ENCODE measurements at regions of chr2 and their contacts with region 1.

Region 1: DNA sequence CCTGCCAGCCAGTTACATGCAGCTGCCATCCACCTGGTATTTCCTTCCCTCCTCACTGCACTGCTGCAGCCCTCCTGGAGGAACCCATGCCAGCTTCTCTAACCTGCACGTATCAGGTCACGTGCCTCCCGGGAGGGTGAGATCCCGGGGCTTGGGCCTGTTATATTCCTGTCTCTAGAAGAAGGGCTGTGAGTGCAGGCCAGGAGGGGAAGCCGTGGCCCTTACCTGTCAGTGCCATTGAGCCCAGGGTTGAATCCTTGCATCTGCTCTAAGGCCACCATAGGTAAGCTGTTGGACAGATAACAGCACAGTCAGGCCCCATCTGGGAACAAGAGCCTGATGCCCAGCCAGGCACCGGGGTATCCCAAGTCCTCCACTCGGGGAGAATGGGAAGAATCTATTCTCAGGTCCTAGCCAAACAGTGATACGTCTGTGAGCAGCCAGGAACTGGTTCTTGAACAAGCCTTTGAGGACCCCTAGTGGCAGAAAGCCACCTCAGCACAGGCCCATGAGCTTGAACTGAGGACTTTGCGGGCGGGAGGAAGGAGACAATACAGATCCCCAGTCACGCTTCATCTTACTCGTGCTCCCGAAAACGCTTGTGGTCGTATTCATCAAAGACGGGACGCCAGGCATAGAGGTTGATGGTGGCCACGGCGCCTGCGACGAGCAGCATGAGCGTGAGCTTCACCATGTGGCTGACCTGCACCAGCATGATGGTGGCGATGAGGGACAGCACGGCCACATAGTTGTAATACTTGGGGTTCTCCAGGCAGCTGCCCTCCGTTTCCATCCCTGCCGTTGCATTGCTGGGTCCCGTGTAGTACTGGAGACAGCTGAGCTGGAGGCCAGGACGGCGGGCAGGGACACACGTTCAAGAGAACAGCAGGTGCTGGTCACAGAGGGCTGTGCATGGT is 34.4 kb downstream of the CENPO start:
- DNase-seq: peak; percentile 61
- ATAC-seq: peak; percentile 87
- H3K4me3 ChIP-seq: no peak overlapping the region
- H3K27ac ChIP-seq: no peak overlapping the region
- H3K4me1 ChIP-seq: no peaks in the 10 kb centered on the region
- H3K27me3 ChIP-seq: no peaks in the 10 kb centered on the region
- CTCF ChIP-seq: peak; percentile 77 to 92 (median 91)
- POLR2A ChIP-seq: no peak
- RAD21 ChIP-seq: peak; percentile 94

Region 2: DNA sequence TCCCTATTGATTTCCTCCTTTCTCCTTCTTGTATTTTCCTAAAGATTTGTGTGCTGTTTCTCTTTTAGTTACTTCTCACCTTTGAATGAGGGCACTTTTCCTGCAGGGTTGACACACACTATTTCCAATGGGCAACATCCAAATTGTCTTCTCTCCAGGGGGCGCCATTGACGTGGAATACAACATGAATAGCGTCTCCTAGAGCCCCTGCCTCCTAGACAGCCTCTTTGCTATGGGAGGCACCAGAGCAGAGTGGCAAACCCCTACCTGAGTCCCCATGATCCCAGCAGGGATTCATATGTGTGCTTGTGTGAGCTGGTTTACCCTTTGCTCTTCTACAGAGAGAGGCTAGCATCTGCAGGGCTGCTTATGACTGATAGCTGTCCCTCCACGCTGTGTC is 405.9 kb before region 1 on chr2:
- CTCF ChIA-PET with region 1: interaction called, 54 read pairs
- POLR2A ChIA-PET with region 1: interaction called, 3 read pairs
- RAD21 ChIA-PET with region 1: interaction called, 3 to 6 read pairs
- intact Hi-C with region 1: loop called (anchors 1 kb)
- DNase-seq: peak; percentile 48
- ATAC-seq: peak; percentile 97
- H3K4me3 ChIP-seq: no peak overlapping the region
- H3K27ac ChIP-seq: no peak overlapping the region
- H3K4me1 ChIP-seq: no peaks in the 10 kb centered on the region
- H3K27me3 ChIP-seq: no peaks in the 10 kb centered on the region
- CTCF ChIP-seq: peak; percentile 59 to 90 (median 84); a peak in 5 of 6 replicates
- POLR2A ChIP-seq: no peak
- RAD21 ChIP-seq: peak; percentile 94

Region 3: GRCh38 chr2:25201265-25201664 is 373.7 kb after region 1 on chr2:
- CTCF ChIA-PET with region 1: interaction called, 3 read pairs
- POLR2A ChIA-PET with region 1: no interaction called
- RAD21 ChIA-PET with region 1: no interaction called
- intact Hi-C with region 1: loop called (anchors 5 kb)
- DNase-seq: peak; percentile 16
- ATAC-seq: peak; percentile 85
- H3K4me3 ChIP-seq: no peak overlapping the region
- H3K27ac ChIP-seq: no peak overlapping the region
- H3K4me1 ChIP-seq: 0 out of 4 replicates have a peak, but pooled peaks cover 0 to 4% of the 10 kb centered on the region in 2 experiments
- H3K27me3 ChIP-seq: no peaks in the 10 kb centered on the region
- CTCF ChIP-seq: peak in 2 of 3 experiments; percentile 46 to 54; a peak in 4 of 6 replicates
- POLR2A ChIP-seq: no peak
- RAD21 ChIP-seq: no peak

Region 4: DNA sequence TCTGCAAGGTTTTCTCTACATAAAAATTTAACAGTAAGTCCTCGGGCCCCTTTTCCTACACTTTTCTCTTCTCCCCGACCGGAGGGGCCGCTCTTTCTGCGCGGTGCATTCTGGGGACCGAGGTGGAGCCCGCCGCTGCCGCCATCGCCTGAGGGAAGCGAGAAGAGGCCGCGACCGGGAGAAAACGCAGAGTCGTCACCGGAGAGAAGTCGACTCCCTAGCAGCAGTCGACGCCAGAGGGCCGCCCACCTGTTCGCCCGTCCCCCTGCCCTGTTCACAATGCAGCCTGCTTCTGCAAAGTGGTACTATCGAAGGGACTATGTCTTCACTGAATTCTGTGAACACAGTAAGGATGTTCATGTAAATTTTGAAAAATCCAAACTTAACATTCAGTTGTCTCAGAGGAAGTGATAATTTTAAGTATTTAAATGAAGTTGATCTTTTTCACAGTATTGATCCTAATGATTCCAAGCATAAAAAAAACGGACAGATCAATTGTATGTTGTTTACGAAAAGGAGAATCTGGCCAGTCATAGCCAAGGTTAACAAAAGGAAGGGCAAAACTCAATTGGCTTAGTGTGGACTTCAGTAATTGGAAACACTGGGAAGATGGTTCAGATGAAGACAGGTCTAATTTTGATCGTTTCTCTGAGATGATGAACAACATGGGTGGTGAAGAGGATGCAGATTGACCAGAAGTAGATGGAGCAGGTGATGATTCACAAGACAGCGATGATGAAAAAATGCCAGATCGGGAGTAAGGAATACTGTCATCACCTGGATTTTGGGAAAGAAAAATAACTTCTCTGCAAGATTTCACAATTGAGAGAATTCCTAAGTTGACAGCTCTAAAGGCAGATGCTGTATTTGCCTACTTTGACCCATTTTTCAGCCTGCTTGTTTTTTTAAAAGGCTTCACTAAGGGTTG is 994.9 kb after region 1 on chr2:
- CTCF ChIA-PET with region 1: no interaction called
- POLR2A ChIA-PET with region 1: no interaction called
- RAD21 ChIA-PET with region 1: no interaction called
- intact Hi-C with region 1: no loop called
- DNase-seq: no peak
- ATAC-seq: no peak
- H3K4me3 ChIP-seq: no peak overlapping the region
- H3K27ac ChIP-seq: no peak overlapping the region
- H3K4me1 ChIP-seq: no peaks in the 10 kb centered on the region
- H3K27me3 ChIP-seq: no peaks in the 10 kb centered on the region
- CTCF ChIP-seq: no peak
- POLR2A ChIP-seq: no peak
- RAD21 ChIP-seq: no peak

Measured in HCT116 (cell line).